ENCODE measurements at regions of chr19 and their contacts with region 1.

Region 1: GRCh38 chr19:860481-861101 is 1.1 kb downstream of the CFD start:
- DNase-seq: peak; percentile 82
- ATAC-seq: peak; percentile 66 to 68

Region 2: DNA sequence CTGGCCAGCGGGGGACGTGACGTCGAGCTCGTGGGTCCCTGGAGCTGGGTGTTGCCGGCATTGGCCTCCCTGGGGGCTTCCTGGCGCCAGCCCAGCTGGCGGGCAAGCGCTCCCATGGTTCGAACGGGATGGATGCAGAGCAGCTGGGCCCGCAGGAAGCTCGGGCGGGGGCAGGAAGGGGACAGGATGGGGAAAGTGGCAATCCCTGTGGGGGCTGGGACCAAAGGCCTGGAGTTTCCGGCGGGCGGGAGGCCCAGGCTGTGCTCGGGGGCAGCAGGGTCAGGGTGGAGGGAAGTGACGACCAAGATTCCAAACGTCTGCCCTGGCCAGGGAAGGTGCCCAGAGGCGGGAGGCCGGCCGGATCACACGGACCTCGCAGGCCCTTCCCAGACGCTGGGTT is 132.6 kb before region 1 on chr19:
- intact Hi-C with region 1: no loop called
- DNase-seq: peak; percentile 91
- ATAC-seq: peak; percentile 86 to 89

Region 3: GRCh38 chr19:917323-918151 is 56.9 kb after region 1 on chr19 and contains the start of gene KISS1R:
- intact Hi-C with region 1: loop called (anchors 5 kb)
- DNase-seq: no peak
- ATAC-seq: no peak
- total RNA-seq, gene KISS1R: not detected

Measured in left cardiac atrium (tissue), 4 donors.